ENCODE measurements at regions of chr1 and their contacts with region 1.

Region 1: GRCh38 chr1:150578965-150579798 is at the start of gene MCL1:
- DNase-seq: peak; percentile 95 to 98 (median 97)
- H3K4me3 ChIP-seq: peak within 1 kb of the TSS; percentile 81 to 100 (median 100)
- H3K4me3 Mint-ChIP-seq: peak within 1 kb of the TSS; percentile 96 to 99
- H3K27ac ChIP-seq: peak within 1 kb of the TSS; percentile 91 to 97
- H3K27ac Mint-ChIP-seq: peak within 1 kb of the TSS; percentile 98 to 100 (median 98)
- H3K4me1 ChIP-seq: peaks cover 41 to 53% of the 10 kb centered on the region in 2 donors
- H3K4me1 Mint-ChIP-seq: peaks cover 46% of the 10 kb centered on the region
- H3K27me3 ChIP-seq: no peaks in the 10 kb centered on the region
- H3K27me3 Mint-ChIP-seq: peaks cover 0 to 8% (median 2%) of the 10 kb centered on the region in 3 donors
- CTCF ChIP-seq: no peak
- polyA plus RNA-seq, gene MCL1: 287 to 2,076 (median 301) TPM

Region 2: GRCh38 chr1:150561974-150562445 is 17.2 kb before region 1 on chr1:
- intact Hi-C with region 1: loop called (anchors 1 to 2 kb)
- DNase-seq: peak; percentile 65 to 73 (median 71)
- H3K4me3 ChIP-seq: peak overlapping the region; percentile 46 to 92 (median 61)
- H3K4me3 Mint-ChIP-seq: peak overlapping the region; percentile 93
- H3K27ac ChIP-seq: peak overlapping the region; percentile 88 to 94
- H3K27ac Mint-ChIP-seq: peak overlapping the region; percentile 96 to 100 (median 98)
- H3K4me1 ChIP-seq: peaks cover 84 to 85% of the 10 kb centered on the region in 2 donors
- H3K4me1 Mint-ChIP-seq: peaks cover 75% of the 10 kb centered on the region
- H3K27me3 ChIP-seq: no peaks in the 10 kb centered on the region
- H3K27me3 Mint-ChIP-seq: peaks cover 0 to 2% (median 0%) of the 10 kb centered on the region in 3 donors
- CTCF ChIP-seq: no peak

Region 3: GRCh38 chr1:150613061-150613920 is 34.1 kb after region 1 on chr1:
- intact Hi-C with region 1: loop called (anchors 2 to 5 kb)
- DNase-seq: peak; percentile 91 to 99 (median 97)
- H3K4me3 ChIP-seq: peak overlapping the region; percentile 3 to 63 (median 6)
- H3K4me3 Mint-ChIP-seq: peak overlapping the region; percentile 77 to 86
- H3K27ac ChIP-seq: peak overlapping the region; percentile 99 to 100
- H3K27ac Mint-ChIP-seq: peak overlapping the region; percentile 97 to 100 (median 100)
- H3K4me1 ChIP-seq: peaks cover 66 to 81% of the 10 kb centered on the region in 2 donors
- H3K4me1 Mint-ChIP-seq: peaks cover 69% of the 10 kb centered on the region
- H3K27me3 ChIP-seq: no peaks in the 10 kb centered on the region
- H3K27me3 Mint-ChIP-seq: peaks cover 0 to 7% (median 5%) of the 10 kb centered on the region in 3 donors
- CTCF ChIP-seq: no peak

Region 4: DNA sequence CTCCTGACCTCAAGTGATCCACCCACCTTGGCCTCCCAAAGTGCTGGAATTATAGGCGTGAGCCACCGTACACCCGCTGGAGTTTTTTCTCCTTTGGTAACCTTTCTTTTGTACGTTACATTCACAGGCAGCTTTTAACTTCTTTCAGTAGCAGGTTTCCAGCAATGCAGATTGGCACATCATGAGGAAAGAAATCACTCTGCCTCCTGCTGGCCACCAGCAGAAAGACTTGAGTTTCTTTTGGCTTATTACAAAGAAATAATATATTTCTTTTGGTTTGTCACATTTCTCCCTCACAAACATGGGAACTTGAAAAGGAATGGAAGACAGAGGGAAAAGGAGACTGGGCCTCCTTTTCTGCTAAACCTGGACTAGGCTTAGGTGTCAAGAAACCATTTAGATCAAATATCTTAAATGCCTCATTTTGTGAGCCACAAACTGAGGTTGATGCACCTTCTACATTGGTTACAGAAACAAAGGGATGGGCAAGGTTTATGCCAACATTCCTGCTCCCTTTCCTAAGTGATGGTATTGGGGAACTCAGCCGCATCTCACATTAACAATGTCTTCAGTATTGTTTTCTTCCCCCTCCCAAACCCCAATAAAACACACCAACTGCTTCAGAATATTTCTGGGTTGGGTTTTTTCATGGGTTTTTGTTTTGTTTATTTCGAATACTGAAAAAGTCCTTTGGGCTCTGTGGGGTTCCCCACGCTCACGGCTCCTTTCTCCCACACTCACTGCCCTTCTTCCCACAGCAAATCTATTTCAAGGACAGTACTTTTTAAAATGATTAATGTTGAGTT is 42.5 kb after region 1 on chr1:
- intact Hi-C with region 1: loop called in 1 of 2 experiments (anchors 5 kb)
- DNase-seq: peak; percentile 65 to 82 (median 76)
- H3K4me3 ChIP-seq: peak overlapping the region in 1 of 3 experiments; percentile 37
- H3K4me3 Mint-ChIP-seq: peak overlapping the region in 1 of 2 donors; percentile 71
- H3K27ac ChIP-seq: peak overlapping the region in 1 of 2 donors; percentile 23
- H3K27ac Mint-ChIP-seq: peak overlapping the region; percentile 84 to 92 (median 85)
- H3K4me1 ChIP-seq: peaks cover 25 to 45% of the 10 kb centered on the region in 2 donors
- H3K4me1 Mint-ChIP-seq: peaks cover 43% of the 10 kb centered on the region
- H3K27me3 ChIP-seq: no peaks in the 10 kb centered on the region
- H3K27me3 Mint-ChIP-seq: no peaks in the 10 kb centered on the region
- CTCF ChIP-seq: peak; percentile 85

Region 5: DNA sequence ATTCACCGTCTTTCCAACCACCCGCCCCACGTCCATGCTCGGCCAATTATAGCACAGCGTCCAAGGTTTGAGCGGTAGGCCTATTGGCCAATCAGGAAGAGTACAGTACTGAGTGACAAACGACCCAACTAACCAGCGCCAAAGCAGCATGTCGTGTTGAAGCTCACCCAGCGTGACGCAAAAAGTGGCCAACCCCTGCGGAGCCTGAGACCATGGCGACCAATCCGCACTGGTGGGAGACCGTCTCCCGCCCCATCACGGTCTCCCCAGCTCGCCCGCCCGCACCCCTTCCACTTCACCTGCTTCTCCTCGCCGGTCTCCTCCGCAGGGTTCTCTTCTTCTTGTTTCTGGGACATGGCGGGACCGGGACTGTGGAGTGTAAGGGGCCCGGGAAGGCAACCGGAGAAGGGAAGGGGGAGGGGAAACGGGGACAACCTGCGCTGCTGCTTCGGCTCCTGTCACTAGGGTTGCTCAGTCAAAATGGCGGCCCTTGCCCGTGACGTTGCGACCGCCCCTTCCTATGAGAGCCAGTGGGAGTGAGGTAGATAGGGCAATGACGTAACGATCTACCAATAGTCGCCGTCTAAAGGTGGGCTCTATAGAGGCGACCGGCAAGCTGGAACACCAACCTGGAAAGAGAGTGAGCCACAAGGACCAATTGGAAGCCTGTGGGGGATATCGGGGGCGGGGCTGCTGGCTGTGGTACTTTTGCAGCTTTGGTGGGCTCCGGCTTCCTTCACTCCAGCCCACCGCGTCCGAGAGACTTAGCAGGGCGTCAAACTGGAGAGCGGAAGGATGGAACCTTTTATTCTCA is 50.1 kb after region 1 on chr1 and contains the start of gene ENSA:
- intact Hi-C with region 1: loop called (anchors 2 to 5 kb)
- DNase-seq: peak; percentile 98 to 99 (median 99)
- H3K4me3 ChIP-seq: peak within 1 kb of the TSS; percentile 69 to 88 (median 72)
- H3K4me3 Mint-ChIP-seq: no peak within 1 kb of the TSS
- H3K27ac ChIP-seq: peak within 1 kb of the TSS; percentile 94 to 98
- H3K27ac Mint-ChIP-seq: no peak within 1 kb of the TSS
- H3K4me1 ChIP-seq: peaks cover 18 to 21% of the 10 kb centered on the region in 2 donors
- H3K4me1 Mint-ChIP-seq: peaks cover 6% of the 10 kb centered on the region
- H3K27me3 ChIP-seq: no peaks in the 10 kb centered on the region
- H3K27me3 Mint-ChIP-seq: no peaks in the 10 kb centered on the region
- CTCF ChIP-seq: no peak
- polyA plus RNA-seq, gene ENSA: 30.6 to 40.3 (median 38.5) TPM

Region 6: DNA sequence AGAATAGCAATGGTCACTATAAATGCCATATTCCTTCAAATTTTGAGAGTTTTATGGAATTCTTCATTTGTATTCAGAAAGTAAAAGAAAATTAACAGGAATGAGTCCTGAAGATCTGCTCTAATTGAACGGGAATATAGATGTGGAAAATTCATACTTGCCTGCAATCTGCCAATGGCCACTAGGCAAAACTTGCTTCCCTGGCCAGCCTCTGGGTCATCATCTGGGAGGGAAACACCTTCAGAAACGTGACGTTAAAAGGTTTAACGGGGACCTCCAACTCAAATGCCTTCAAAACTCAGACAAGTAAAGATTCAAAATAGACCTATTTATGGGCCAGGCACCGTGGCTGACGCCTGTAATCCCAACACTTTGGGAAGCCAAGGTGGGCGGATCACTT is 250.6 kb after region 1 on chr1:
- intact Hi-C with region 1: no loop called
- DNase-seq: no peak
- H3K4me3 ChIP-seq: no peak overlapping the region
- H3K4me3 Mint-ChIP-seq: no peak overlapping the region
- H3K27ac ChIP-seq: no peak overlapping the region
- H3K27ac Mint-ChIP-seq: peak overlapping the region in 1 of 7 donors; percentile 11
- H3K4me1 ChIP-seq: no peaks in the 10 kb centered on the region
- H3K4me1 Mint-ChIP-seq: no peaks in the 10 kb centered on the region
- H3K27me3 ChIP-seq: no peaks in the 10 kb centered on the region
- H3K27me3 Mint-ChIP-seq: peaks cover 0 to 1% (median 0%) of the 10 kb centered on the region in 3 donors
- CTCF ChIP-seq: peak; percentile 41

Region 7: DNA sequence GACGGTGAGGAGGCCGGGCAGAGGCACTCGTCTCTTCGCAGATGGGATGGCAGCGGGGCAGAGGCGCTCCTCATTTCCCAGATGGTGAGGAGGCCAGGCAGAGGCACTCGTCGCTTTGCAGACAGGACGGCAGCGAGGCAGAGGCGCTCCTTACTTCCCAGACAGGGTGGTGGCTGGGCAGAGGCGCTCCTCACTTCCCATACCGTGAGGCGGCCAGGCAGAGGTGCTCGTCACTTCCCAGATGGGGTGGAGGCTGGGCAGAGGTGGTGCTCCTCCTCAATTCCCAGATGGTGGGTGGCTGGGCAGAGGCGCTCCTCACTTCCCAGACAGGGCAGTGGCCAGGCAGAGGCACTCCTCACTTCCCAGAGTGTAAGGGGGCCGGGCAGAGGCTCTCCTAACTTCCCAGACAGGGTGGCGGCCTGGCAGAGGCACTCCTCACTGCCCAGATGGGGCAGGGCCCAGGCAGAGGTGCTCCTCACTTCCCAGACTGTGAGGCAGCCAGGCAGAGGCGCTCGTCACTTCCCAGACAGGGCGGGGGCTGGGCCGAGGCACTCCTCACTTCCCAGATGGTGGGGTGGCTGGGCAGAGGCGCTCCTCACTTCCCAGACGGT is 1499.8 kb after region 1 on chr1:
- intact Hi-C with region 1: no loop called
- DNase-seq: no peak
- H3K4me3 ChIP-seq: no peak overlapping the region
- H3K4me3 Mint-ChIP-seq: no peak overlapping the region
- H3K27ac ChIP-seq: no peak overlapping the region
- H3K27ac Mint-ChIP-seq: no peak overlapping the region
- H3K4me1 ChIP-seq: no peaks in the 10 kb centered on the region
- H3K4me1 Mint-ChIP-seq: no peaks in the 10 kb centered on the region
- H3K27me3 ChIP-seq: peaks cover 4 to 5% of the 10 kb centered on the region in 2 donors
- H3K27me3 Mint-ChIP-seq: peaks cover 3 to 29% (median 3%) of the 10 kb centered on the region in 3 donors
- CTCF ChIP-seq: no peak